Endothelial cell of umbilical vein (primary cell): ENCODE measurements at regions of chr12 and their contacts with region 1.

Region 1: DNA sequence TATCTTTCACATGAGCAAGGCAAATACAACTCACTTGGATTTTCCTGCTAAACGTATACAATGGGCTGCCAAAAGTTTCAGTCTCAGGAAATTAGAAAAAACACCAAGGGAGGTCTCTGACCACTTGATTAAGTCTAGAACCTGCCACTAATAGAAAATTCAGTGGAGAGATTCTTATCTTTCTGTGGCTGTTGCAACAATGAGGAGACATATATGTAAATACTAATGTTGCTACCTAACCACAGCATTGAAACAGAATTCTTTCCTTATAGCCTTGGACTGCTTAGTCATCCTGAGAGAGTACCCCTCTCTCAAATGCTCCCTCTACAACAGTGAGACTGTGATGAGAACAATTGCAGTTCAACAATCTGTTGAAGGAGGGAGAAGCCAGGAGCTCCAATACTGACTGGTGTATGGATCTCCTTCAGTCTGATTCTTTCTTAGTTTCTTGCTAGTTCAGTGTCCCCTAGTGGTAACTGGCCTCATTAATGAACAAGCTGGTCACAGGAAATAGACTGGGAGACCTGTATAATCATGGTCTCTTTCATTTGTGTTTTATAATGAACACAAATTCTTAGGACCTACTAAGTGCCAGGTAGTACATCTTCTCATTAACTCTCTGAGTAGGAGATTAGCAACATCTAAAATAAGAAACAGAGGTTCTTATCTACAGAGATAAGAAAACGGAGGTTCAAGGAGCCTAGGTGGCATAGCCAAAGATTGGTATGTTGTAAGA is 164.5 kb downstream of the SLC38A4 start:
- DNase-seq: peak; percentile 94
- H3K4me3 ChIP-seq: no peak overlapping the region
- H3K27ac ChIP-seq: peak overlapping the region; percentile 83
- H3K4me1 ChIP-seq: peaks cover 59% of the 10 kb centered on the region
- H3K27me3 ChIP-seq: no peaks in the 10 kb centered on the region
- CTCF ChIP-seq: peak; percentile 57 to 69
- POLR2A ChIP-seq: peak; percentile 32

Region 2: DNA sequence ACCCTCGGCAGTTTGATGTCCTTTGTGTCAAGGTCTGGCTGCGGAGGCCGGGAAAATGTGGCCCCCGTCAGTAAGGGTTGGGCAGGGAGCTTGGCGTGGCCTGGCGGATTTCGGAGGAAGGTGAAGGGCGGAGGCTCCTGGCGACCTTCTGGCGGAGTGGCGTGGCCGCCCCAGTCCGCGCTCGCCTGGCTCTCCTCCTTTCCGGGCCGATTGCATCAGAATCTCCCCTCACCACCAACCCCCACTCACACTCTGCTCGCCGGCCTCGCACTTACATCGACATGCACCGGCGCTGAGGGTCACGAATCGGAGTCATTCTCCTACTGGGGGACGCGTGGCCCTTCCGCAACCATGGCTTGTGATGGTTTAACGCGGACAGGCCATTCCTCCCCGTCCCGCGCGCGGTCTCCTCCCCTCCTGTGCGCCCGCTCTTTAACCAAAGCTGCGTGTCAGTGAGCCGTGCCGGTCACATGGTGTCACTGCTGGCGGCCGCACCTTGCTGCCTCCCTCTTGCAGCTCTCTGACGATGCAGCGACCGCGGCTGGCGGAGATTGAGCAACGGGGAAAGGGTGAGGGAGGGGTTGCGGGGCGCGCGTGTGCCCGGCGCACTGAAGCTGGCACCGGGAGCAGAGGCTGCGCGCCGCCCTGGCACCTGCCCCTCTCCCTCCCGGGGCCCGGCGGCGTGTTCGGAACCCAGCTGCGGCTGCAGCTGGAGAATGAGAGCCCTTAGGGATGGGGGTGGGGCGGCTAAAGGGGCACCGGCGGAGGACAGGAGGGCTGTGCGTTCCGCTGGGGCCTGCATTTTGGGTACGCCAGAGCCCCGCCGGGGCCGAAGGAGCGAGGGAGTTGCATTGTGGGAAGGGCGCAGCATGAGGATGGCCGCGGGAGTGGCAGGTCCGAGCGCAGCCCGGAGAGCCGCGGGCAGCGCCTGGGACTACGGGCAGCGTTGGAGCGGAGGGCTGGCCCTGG is 392.4 kb before region 1 on chr12 and contains the start of gene SLC38A1:
- CTCF ChIA-PET with region 1: no interaction called
- POLR2A ChIA-PET with region 1: no interaction called
- dilution Hi-C with region 1: no loop called
- intact Hi-C with region 1: loop called (anchors 1 kb)
- DNase-seq: peak; percentile 73
- H3K4me3 ChIP-seq: peak within 1 kb of the TSS; percentile 59 to 85 (median 84)
- H3K27ac ChIP-seq: peak within 1 kb of the TSS; percentile 82
- H3K4me1 ChIP-seq: peaks cover 31% of the 10 kb centered on the region
- H3K27me3 ChIP-seq: no peaks in the 10 kb centered on the region
- CTCF ChIP-seq: no peak
- POLR2A ChIP-seq: peak; percentile 66
- total RNA-seq, gene SLC38A1: 81.0 and 86.4 TPM in 2 replicates

Region 3: GRCh38 chr12:46372544-46373110 is 288.7 kb before region 1 on chr12 and contains the start of gene SLC38A2:
- CTCF ChIA-PET with region 1: interaction called, 21 read pairs
- POLR2A ChIA-PET with region 1: interaction called, 13 read pairs
- dilution Hi-C with region 1: no loop called
- intact Hi-C with region 1: loop called (anchors 1 kb)
- DNase-seq: peak; percentile 93
- H3K4me3 ChIP-seq: peak within 1 kb of the TSS; percentile 90 to 98 (median 91)
- H3K27ac ChIP-seq: peak within 1 kb of the TSS; percentile 96
- H3K4me1 ChIP-seq: peaks cover 29% of the 10 kb centered on the region
- H3K27me3 ChIP-seq: no peaks in the 10 kb centered on the region
- CTCF ChIP-seq: no peak
- POLR2A ChIP-seq: peak; percentile 100
- total RNA-seq, gene SLC38A2: 427 and 459 TPM in 2 replicates

Region 4: DNA sequence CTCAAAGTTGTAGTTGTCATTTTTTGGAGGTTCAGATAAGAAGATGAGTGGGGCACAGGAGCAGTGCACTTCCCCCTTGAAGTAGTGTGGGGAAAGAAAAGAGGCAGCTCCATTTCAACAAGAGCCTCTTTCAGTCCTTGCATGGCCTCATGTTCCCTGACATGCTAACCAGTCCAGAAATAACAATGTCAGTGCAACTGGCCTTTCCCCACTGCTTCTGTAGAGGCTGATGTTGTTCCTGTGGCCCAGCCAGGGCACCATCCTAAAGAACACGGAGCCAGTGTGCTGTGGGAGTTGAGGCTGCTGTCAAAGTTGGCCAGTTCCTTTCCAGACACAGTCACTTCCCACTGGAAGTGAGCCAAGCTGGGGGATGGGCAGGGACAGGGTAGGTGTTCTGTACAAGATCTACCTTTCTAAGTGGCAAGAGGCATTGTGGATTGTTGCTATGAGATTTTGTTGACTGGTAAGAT is 211.0 kb before region 1 on chr12:
- CTCF ChIA-PET with region 1: interaction called, 16 read pairs
- POLR2A ChIA-PET with region 1: no interaction called
- dilution Hi-C with region 1: no loop called
- intact Hi-C with region 1: loop called (anchors 5 kb)
- DNase-seq: peak; percentile 73
- H3K4me3 ChIP-seq: no peak overlapping the region
- H3K27ac ChIP-seq: peak overlapping the region; percentile 84
- H3K4me1 ChIP-seq: peaks cover 64% of the 10 kb centered on the region
- H3K27me3 ChIP-seq: no peaks in the 10 kb centered on the region
- CTCF ChIP-seq: no peak
- POLR2A ChIP-seq: no peak

Region 5: GRCh38 chr12:46492471-46493351 is 168.6 kb before region 1 on chr12:
- CTCF ChIA-PET with region 1: interaction called, 18 read pairs
- POLR2A ChIA-PET with region 1: interaction called, 3 read pairs
- dilution Hi-C with region 1: no loop called
- intact Hi-C with region 1: loop called (anchors 1 kb)
- DNase-seq: peak; percentile 93
- H3K4me3 ChIP-seq: no peak overlapping the region
- H3K27ac ChIP-seq: peak overlapping the region; percentile 97
- H3K4me1 ChIP-seq: peaks cover 43% of the 10 kb centered on the region
- H3K27me3 ChIP-seq: no peaks in the 10 kb centered on the region
- CTCF ChIP-seq: no peak
- POLR2A ChIP-seq: peak; percentile 63

Region 6: DNA sequence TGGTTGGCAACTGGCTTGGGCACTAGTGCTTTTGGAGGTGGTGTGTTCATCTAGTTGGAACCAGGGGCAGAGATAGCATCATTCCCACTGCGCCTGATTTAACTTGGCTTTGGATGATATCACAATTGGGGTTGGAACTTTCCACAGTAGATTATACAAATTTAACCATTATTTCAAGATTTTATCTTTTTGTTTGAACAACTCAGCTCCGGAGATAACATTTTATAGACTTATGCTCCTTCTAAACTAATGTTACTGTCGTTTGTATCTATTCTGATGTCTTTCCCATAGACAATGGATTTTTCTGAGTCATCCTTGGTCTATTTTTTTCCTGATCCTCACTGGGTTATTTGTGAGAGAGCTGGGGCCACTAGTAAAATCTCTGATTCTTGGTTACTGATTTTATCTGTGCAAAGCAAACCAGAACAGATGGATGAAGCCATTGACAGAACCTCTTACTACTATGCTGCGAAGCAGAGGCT is 10.6 kb before region 1 on chr12:
- CTCF ChIA-PET with region 1: interaction called, 14 read pairs
- POLR2A ChIA-PET with region 1: no interaction called
- dilution Hi-C with region 1: no loop called
- intact Hi-C with region 1: no loop called
- DNase-seq: no peak
- H3K4me3 ChIP-seq: no peak overlapping the region
- H3K27ac ChIP-seq: no peak overlapping the region
- H3K4me1 ChIP-seq: peaks cover 7% of the 10 kb centered on the region
- H3K27me3 ChIP-seq: no peaks in the 10 kb centered on the region
- CTCF ChIP-seq: no peak
- POLR2A ChIP-seq: no peak